Right ventricle myocardium superior (tissue), 1 donor: ENCODE measurements at regions of chr17 and their contacts with region 1.

Region 1: GRCh38 chr17:2094891-2095535 is 40.1 kb downstream of the HIC1 start:
- DNase-seq: peak; percentile 80
- ATAC-seq: peak; percentile 94

Region 2: DNA sequence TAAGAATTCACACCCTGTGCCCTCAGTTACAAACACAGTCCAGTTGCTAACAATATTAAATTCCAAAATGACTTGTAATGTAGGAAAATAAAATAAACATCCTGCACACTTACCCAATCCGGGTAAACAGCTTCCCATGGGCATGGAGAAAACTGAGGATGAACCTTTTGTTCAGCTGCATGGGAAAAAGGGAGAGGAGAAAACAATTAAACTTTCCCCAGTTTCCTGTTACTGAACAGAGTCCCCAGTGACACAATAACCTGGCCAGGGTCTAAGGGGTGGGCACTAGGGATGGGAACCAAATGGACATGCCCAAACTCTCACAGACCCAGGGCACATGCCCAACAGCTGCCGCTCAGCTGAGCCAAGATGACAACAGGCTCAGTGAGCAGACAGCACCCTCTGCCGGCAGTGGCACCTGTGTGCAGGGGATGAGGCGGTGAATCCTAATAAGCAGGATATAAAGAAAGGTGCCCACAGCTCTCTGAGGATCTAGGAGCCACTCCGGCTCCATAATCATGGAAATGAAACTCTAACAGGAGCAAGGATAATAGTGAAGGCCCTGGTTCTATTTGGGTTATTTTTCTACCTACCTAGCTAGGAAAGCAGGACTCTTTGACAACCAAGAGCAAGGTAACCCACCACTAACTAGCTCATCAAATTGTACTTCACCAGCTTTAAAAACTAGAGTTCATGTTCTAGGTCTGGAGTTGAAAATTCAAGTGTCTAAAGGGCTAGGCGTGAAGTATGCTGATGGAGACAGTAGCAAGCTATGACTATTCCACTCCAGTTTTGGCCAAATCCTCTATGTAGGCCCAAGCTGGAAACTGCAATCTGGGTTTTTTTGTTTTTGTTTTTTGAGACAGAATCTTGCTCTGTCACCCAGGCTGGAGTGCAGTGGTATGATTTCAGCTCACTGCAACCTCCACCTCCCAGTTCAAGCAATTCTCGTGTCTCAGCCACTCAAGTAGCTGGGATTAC is 149.8 kb after region 1 on chr17:
- intact Hi-C with region 1: loop called (anchors 10 kb)
- DNase-seq: peak; percentile 93
- ATAC-seq: peak; percentile 93